Left cardiac atrium (tissue), 4 donors: ENCODE measurements at regions of chr2 and their contacts with region 1.

Region 1: GRCh38 chr2:164717000-164717803 is 95.9 kb upstream of the GRB14 start:
- DNase-seq: no peak
- ATAC-seq: no peak

Region 2: DNA sequence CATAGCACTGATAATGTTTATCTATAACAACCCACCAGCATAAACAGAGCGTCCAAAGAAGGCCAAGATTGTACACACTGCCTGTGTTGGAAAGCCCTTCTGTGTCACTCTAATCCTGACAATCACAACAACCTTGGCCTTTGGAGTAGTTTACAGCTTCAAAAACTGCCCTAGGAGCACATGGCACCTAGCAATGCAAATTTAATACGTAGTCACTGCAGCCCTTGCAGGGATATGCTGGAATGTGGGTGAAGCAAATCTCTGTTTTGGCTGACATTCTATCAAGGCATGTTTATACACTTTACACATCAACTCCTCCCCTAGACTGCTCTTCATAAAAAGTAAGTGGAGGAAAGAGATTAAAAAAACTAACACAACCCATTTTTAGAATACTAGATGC is 162.7 kb before region 1 on chr2:
- intact Hi-C with region 1: loop called (anchors 2 to 10 kb)
- DNase-seq: no peak
- ATAC-seq: peak in 1 of 2 donors; percentile 26

Region 3: GRCh38 chr2:164560181-164560792 is 156.9 kb before region 1 on chr2:
- intact Hi-C with region 1: loop called (anchors 2 to 10 kb)
- DNase-seq: no peak
- ATAC-seq: no peak

Region 4: DNA sequence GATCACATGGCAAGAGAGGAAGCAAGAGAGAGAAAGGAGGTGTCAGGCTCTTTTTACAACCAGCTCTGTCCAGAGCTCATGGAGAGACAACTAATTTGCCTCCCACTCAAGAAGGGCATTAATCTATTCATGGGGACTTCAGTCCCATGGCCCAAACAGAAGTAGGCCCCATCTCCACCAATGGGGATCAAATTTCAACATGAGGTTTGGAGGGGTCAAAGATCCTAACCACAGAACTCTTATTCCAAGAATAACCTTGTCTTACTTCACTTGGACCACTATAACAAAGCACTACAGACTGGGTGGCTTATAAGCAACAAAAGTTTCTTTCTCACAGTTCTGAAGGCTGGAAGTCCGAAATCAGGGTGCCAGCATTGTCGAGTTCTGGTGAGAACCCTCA is 127.7 kb before region 1 on chr2:
- intact Hi-C with region 1: no loop called
- DNase-seq: no peak
- ATAC-seq: no peak

Region 5: GRCh38 chr2:164681009-164681408 is 36.2 kb before region 1 on chr2:
- intact Hi-C with region 1: no loop called
- DNase-seq: no peak
- ATAC-seq: no peak

Region 6: DNA sequence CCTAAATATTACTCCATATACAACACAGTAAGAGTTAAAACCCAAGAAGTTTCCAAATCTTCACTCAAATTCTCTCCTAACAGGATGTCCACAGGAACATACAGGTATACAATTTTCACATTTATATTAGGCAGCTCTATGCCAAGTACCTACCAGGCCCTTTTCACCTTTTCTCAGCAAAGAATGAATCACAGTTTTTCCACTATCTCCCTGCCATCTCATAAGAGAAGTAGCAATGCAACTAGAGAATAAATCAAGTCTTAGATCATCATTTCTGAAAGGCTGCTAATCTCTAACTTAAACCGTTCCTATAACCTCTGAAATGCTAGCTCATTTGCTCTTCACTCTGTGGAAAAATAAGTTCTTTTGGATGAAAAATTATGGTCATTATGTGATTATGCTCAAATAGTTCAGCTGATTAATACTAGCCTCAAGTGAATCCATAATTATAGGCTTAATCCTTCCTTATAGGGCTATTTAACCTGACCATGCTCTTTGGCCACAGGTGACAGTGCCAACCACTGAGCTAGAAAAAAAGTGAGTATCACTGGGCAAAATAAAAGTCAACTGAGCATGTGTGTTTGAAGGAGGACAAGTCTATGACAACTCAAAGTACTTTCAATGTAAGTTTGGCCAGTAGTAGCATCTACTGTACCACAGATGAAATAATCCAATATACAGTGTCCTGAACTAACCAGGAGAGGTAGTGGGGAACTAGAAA is 44.7 kb after region 1 on chr2:
- intact Hi-C with region 1: no loop called
- DNase-seq: no peak
- ATAC-seq: no peak

Region 7: GRCh38 chr2:165794536-165794928 is 1077.3 kb after region 1 on chr2:
- intact Hi-C with region 1: no loop called
- DNase-seq: no peak
- ATAC-seq: peak; percentile 73 to 82